MCF 10A (cell line): ENCODE measurements at regions of chr15 and their contacts with region 1.

Region 1: GRCh38 chr15:101201406-101202174 is 50.3 kb downstream of the CHSY1 start:
- DNase-seq: peak; percentile 95
- H3K4me3 Mint-ChIP-seq: peak overlapping the region; percentile 7
- H3K27ac Mint-ChIP-seq: no peak overlapping the region
- H3K4me1 Mint-ChIP-seq: peaks cover 47% of the 10 kb centered on the region
- H3K27me3 Mint-ChIP-seq: no peaks in the 10 kb centered on the region
- CTCF ChIP-seq: no peak

Region 2: DNA sequence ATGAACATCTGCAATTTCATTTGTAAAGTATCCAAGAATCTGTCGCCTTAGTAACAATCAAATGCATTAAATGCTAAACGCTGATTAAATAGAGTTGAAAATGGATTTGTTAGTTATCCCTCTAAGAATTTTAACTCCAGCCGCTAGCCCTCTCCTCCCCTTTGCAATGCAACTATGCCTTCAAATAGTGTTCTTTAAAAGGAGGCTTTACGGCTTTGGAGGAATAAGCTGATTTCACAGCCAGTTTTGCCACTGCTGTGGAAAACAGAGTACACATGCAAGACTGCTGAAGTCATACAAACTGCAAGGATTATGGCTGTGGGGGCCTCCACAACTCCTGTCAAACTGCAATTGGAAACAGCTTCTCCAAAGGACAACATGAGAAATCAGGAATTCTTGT is 762.1 kb before region 1 on chr15:
- CTCF ChIA-PET with region 1: no interaction called
- POLR2A ChIA-PET with region 1: no interaction called
- intact Hi-C with region 1: no loop called
- DNase-seq: no peak
- H3K4me3 Mint-ChIP-seq: no peak overlapping the region
- H3K27ac Mint-ChIP-seq: no peak overlapping the region
- H3K4me1 Mint-ChIP-seq: peaks cover 5% of the 10 kb centered on the region
- H3K27me3 Mint-ChIP-seq: peaks cover 25% of the 10 kb centered on the region
- CTCF ChIP-seq: no peak

Region 3: DNA sequence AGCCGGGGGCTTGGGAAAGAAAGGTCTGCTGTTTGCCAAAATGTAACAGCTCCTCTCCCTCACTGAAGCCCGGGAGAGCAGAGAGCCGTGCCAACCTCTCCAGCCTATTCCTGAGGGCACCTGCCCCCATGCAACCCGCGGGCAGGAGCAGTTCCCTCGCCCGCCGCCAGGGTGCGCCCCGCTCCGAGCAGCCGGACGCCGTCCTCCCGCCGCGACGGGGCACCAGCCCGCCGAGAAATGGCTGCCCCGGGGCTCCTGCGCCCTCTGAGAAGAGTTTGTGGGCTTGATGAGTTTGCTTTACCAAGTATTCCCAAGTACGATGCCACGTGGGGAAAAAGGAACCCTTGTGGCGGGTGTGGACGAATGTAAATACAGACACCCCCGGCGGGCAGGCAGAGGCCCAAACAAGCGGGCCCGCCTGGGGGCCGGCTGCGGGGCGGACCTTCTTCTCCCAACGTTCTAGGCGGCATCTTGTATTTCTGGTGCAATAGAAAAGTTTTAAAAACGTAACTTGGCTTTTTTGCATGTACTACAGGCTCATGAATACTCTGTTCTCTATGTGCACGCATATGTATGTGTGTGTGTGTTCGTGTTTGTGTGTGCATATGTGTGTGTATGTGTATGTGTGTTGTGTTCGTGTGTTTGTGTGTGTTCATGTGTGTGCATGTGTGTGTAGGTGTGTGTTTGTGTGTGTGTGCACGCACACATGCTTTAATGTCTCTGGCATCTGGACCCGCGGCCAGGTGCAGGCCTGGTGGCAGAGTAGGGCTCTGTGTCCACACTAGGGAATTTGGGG is 112.6 kb before region 1 on chr15:
- CTCF ChIA-PET with region 1: interaction called, 4 read pairs
- POLR2A ChIA-PET with region 1: no interaction called
- intact Hi-C with region 1: loop called (anchors 2 kb)
- DNase-seq: peak; percentile 61
- H3K4me3 Mint-ChIP-seq: no peak overlapping the region
- H3K27ac Mint-ChIP-seq: no peak overlapping the region
- H3K4me1 Mint-ChIP-seq: no peaks in the 10 kb centered on the region
- H3K27me3 Mint-ChIP-seq: no peaks in the 10 kb centered on the region
- CTCF ChIP-seq: peak; percentile 99

Region 4: DNA sequence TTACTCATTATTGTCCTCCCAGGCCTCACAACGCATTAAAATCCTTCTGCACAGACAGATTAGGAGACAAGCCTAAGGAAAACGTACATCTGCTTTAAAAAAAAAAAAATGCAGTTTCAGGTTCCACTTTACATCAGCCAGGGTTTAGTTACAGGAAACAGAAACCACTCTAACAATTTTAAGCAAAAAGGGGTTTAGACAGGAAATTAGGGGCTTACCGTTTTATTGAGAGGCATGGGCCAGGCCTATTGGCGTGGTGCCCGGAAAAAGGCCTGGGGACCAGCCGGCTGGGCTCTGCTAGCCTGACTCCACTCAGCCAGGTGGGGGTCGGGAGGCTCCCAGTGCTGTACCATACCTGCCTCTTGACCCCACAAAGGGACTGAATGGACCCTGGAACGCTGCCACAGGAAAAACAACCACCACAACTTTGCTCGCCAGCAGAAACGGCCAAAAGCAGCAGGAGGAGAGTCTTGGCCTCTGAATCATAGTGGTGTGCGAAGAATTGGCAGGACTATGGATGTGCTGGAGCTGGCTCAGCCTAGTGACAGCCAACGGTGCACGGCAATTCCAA is 74.0 kb before region 1 on chr15:
- CTCF ChIA-PET with region 1: no interaction called
- POLR2A ChIA-PET with region 1: interaction called, 8 read pairs
- intact Hi-C with region 1: loop called (anchors 5 kb)
- DNase-seq: peak; percentile 86
- H3K4me3 Mint-ChIP-seq: peak overlapping the region; percentile 67
- H3K27ac Mint-ChIP-seq: peak overlapping the region; percentile 97
- H3K4me1 Mint-ChIP-seq: peaks cover 35% of the 10 kb centered on the region
- H3K27me3 Mint-ChIP-seq: no peaks in the 10 kb centered on the region
- CTCF ChIP-seq: no peak

Region 5: DNA sequence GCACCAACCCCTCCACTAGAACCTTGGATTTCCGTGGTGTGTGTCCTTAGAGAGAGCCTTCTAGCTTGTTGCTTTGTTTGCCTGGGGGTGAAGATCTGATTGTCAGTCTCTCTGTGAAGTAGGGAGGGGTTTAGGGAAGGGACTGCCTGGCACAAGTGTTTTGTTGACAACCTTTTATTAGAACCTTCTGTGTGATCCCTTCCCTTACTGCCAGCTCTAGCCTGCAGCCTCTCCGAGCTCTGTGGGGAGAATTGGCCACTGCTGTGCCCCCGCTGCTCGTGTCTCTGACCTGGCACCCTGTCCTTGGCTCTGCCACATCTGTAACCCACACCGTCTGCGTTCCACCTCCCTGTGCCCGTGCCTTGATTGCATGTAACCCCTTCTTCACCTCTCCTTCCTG is 318.8 kb after region 1 on chr15:
- CTCF ChIA-PET with region 1: no interaction called
- POLR2A ChIA-PET with region 1: no interaction called
- intact Hi-C with region 1: no loop called
- DNase-seq: no peak
- H3K4me3 Mint-ChIP-seq: no peak overlapping the region
- H3K27ac Mint-ChIP-seq: no peak overlapping the region
- H3K4me1 Mint-ChIP-seq: no peaks in the 10 kb centered on the region
- H3K27me3 Mint-ChIP-seq: peaks cover 31% of the 10 kb centered on the region
- CTCF ChIP-seq: no peak